ENCODE measurements at regions of chr6 and their contacts with region 1.

Region 1: GRCh38 chr6:90393232-90393884 is 96.7 kb upstream of the BACH2 start:
- DNase-seq: peak in 2 of 3 donors; percentile 36 to 81
- ATAC-seq: peak; percentile 81
- H3K4me3 ChIP-seq: no peak overlapping the region
- H3K4me1 ChIP-seq: no peaks in the 10 kb centered on the region
- CTCF ChIP-seq: peak; percentile 38

Region 2: GRCh38 chr6:89940225-89941027 is 452.9 kb before region 1 on chr6:
- intact Hi-C with region 1: loop called in 1 of 2 experiments (anchors 10 kb)
- DNase-seq: peak in 2 of 3 donors; percentile 58 to 85
- ATAC-seq: peak; percentile 92
- H3K4me3 ChIP-seq: no peak overlapping the region
- H3K4me1 ChIP-seq: peaks cover 12% of the 10 kb centered on the region
- CTCF ChIP-seq: peak; percentile 35

Region 3: GRCh38 chr6:89970609-89971337 is 422.6 kb before region 1 on chr6:
- intact Hi-C with region 1: loop called in 1 of 2 experiments (anchors 10 kb)
- DNase-seq: peak in 1 of 3 donors; percentile 58
- ATAC-seq: peak; percentile 73
- H3K4me3 ChIP-seq: no peak overlapping the region
- H3K4me1 ChIP-seq: no peaks in the 10 kb centered on the region
- CTCF ChIP-seq: peak; percentile 25

Region 4: GRCh38 chr6:90458353-90459224 is 65.2 kb after region 1 on chr6:
- intact Hi-C with region 1: no loop called
- DNase-seq: peak in 2 of 3 donors; percentile 8 to 52
- ATAC-seq: peak; percentile 23
- H3K4me3 ChIP-seq: no peak overlapping the region
- H3K4me1 ChIP-seq: no peaks in the 10 kb centered on the region
- CTCF ChIP-seq: no peak

Region 5: DNA sequence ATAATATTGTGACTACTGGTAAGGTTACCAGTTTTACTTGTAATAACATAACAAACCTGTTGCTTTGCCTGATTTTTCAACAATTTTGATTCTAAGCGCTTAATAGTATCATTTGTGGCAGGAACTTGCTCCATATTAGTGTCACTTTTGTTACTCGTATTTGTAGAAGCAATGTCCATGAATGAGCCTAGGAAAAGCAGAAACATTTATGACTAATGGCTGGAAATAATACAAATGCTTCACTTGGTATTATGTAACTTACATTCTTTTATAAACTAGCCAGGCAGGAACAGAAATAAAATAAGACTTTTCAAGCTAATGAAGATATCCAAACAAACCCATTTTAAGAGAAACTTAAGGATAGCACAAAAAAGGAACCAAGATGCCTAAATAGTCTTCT is 154.6 kb after region 1 on chr6:
- intact Hi-C with region 1: no loop called
- DNase-seq: no peak
- ATAC-seq: no peak
- H3K4me3 ChIP-seq: no peak overlapping the region
- H3K4me1 ChIP-seq: no peaks in the 10 kb centered on the region
- CTCF ChIP-seq: no peak

Measured in mucosa of descending colon (tissue), 3 donors.